PC-9 (cell line): ENCODE measurements at regions of chr2 and their contacts with region 1.

Region 1: GRCh38 chr2:105582952-105583660 is 161.6 kb upstream of the NCK2 start:
- DNase-seq: peak in 1 of 2 experiments; percentile 38
- H3K4me3 ChIP-seq: no peak overlapping the region
- H3K27ac ChIP-seq: no peak overlapping the region
- H3K4me1 ChIP-seq: no peaks in the 10 kb centered on the region
- H3K27me3 ChIP-seq: peaks cover 3% of the 10 kb centered on the region; the same call in 1 of the 2 replicates
- CTCF ChIP-seq: no peak

Region 2: GRCh38 chr2:105369747-105370690 is 213.1 kb before region 1 on chr2:
- CTCF ChIA-PET with region 1: no interaction called
- POLR2A ChIA-PET with region 1: no interaction called
- intact Hi-C with region 1: no loop called
- DNase-seq: peak in 1 of 2 experiments; percentile 46
- H3K4me3 ChIP-seq: no peak overlapping the region
- H3K27ac ChIP-seq: no peak overlapping the region
- H3K4me1 ChIP-seq: no peaks in the 10 kb centered on the region
- H3K27me3 ChIP-seq: no peaks in the 10 kb centered on the region
- CTCF ChIP-seq: no peak; the same call in 1 of the 2 replicates

Region 3: GRCh38 chr2:105604938-105605337 is 21.8 kb after region 1 on chr2:
- CTCF ChIA-PET with region 1: no interaction called
- POLR2A ChIA-PET with region 1: no interaction called
- intact Hi-C with region 1: no loop called
- DNase-seq: no peak
- H3K4me3 ChIP-seq: no peak overlapping the region
- H3K27ac ChIP-seq: no peak overlapping the region
- H3K4me1 ChIP-seq: no peaks in the 10 kb centered on the region
- H3K27me3 ChIP-seq: peaks cover 19% of the 10 kb centered on the region; the same call in 1 of the 2 replicates
- CTCF ChIP-seq: no peak

Region 4: DNA sequence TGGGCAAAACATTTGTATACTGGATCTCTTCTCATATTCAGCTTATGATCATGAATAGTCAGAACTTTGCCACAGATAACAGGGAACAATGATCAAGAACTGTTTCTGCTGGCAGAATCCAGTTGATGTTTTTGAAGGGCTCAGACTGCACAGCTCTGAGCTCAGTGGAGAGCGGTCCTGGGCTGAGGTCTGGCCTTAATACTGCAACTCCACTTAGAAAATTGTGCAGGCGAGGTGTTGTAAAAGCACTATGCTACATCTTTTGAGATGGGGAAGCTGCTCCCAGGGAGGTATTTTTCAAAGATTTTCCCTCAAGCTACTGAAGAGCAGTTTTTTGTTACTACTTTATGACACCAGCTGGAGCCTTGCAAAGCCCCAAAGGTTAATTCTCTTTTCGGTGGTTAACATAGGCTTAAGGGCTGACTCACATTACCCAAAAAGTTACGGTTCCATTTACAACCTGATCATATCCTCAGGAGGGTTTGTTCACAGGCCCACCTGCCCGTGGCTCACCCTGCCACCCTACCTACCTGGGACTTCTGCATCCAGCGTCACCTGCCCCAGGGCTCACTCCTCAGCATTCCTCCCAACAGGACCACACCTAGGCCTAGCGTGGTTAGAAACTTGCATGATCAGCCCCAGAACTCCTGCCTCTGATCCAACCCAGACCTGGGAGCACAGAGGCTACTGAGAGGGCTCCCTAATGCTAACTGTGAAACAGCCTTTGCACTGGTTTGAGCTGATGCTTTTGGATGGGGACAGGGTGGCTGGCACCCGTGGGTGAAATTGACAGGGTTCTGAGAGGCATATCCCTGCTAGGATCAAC is 276.0 kb after region 1 on chr2:
- CTCF ChIA-PET with region 1: no interaction called
- POLR2A ChIA-PET with region 1: no interaction called
- intact Hi-C with region 1: no loop called
- DNase-seq: peak; percentile 53 to 80
- H3K4me3 ChIP-seq: no peak overlapping the region
- H3K27ac ChIP-seq: peak overlapping the region; percentile 44
- H3K4me1 ChIP-seq: peaks cover 44% of the 10 kb centered on the region
- H3K27me3 ChIP-seq: no peaks in the 10 kb centered on the region
- CTCF ChIP-seq: no peak

Region 5: GRCh38 chr2:106098081-106098480 is 515.0 kb after region 1 on chr2:
- CTCF ChIA-PET with region 1: no interaction called
- POLR2A ChIA-PET with region 1: interaction called, 48 read pairs
- intact Hi-C with region 1: no loop called
- DNase-seq: no peak
- H3K4me3 ChIP-seq: no peak overlapping the region
- H3K27ac ChIP-seq: no peak overlapping the region
- H3K4me1 ChIP-seq: no peaks in the 10 kb centered on the region
- H3K27me3 ChIP-seq: no peaks in the 10 kb centered on the region
- CTCF ChIP-seq: peak; percentile 45; the same call in 1 of the 2 replicates